Left cardiac atrium (tissue), 4 donors: ENCODE measurements at regions of chr12 and their contacts with region 1.

Region 1: DNA sequence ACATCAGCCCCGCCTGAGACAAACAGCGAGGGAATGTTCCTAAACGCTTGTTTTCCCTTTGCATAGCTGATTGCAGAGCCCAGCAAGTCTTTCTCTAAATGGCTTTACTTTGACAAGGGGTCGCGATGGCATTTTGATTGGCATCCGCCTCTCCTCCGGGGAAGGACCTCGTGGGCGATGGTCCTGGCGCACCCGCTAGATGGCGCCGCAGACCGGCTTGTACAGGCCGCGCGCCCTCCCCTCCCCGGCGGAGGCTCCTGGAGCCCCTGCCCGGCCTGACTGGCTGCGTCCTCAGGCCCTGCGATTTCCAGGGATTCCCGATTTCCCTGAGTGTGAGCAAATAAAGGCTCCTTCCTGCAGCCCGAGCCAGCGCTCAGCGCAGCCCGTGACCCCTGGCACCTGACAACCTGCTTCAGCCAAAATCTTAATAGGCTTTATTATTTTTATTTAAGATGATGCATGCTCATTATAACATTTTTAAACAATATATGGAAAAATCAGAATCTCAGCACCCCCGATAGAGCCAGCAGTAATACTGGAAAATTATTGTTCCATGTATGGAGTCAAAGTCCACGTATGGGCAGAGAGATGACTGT is 468.3 kb downstream of the AACS start:
- DNase-seq: no peak
- ATAC-seq: peak; percentile 74 to 75

Region 2: GRCh38 chr12:126747530-126748149 is 1214.1 kb after region 1 on chr12:
- intact Hi-C with region 1: loop called (anchors 5 to 10 kb)
- DNase-seq: peak; percentile 37
- ATAC-seq: peak in 1 of 2 donors; percentile 49

Region 3: DNA sequence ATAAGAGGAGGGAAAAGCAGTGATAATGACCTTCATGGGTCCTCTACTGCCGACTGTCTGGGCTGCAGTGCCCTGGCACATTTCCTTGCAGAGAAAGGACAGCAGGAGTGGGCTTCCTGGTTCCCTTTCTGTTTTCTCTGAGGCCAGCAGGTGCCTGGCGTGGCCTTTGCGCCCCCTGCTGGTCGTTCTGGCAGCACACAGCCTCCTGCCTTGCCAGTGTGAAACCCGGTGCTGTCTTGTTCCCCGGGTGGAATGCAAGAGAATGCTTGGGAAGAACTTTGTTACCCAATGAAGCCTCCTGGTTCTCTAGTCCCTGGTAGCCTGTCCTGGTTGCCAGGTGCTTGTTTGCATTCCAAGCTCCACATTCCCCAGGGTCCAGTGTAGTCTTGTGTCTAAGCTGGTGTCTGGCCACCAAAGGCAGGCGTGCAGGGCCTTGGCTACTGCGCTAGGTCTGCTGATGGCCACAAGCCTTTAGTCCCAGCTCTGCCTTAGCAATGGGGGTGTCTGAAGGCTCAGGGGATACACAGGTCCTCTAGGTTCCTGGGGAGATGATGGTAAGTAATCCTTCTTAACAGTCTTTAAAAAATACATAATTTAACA is 1341.0 kb after region 1 on chr12:
- intact Hi-C with region 1: loop called (anchors 10 kb)
- DNase-seq: peak; percentile 63
- ATAC-seq: peak in 1 of 2 donors; percentile 80